ENCODE measurements at regions of chr3 and their contacts with region 1.

Region 1: DNA sequence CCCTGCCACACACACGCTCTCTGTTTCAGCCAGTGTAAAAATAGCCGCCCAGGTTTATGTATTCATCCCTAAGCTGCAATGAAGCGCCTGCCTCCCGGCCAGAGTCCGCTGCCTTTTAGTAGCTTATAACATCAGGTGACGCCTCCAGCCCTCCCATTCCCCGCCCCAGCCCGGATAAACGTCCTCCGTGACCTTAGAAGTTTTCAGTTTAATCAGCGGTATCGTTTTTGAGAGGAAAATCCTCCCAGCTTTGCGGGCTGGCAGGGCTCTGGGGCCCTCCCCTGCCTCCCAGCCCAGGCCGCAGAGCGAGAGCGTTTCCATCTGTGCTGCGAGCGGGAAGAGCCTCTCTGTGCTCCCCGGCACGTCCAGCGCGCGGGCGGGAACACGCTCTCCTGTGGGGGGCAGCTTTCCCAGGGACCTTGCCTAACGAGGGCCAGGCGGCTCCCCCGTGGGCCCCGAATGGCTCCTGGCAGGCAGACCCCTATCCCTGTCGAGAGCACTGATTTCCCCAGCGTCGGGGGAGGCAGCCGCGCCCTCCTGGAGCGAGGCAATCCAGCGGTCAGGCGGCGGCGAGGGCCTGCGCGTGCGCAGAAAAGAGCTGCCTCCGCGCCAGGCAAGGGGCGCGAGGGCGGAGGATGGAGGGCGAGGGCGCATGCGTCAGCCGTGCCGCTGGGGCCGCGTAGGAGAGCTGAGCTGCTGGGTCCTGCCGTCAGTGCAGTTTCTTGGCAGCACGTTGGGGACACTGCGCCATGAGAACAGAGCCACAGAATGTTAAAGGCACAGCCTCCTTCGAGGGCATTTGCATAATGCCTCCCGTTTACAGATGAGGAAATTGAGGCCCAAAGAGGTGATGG is 71.1 kb downstream of the CCNL1 start:
- DNase-seq: peak; percentile 97
- ATAC-seq: peak; percentile 79
- H3K4me3 Mint-ChIP-seq: peak overlapping the region; percentile 72
- H3K27ac Mint-ChIP-seq: peak overlapping the region; percentile 97
- H3K4me1 Mint-ChIP-seq: peaks cover 71% of the 10 kb centered on the region
- H3K27me3 Mint-ChIP-seq: peaks cover 1% of the 10 kb centered on the region

Region 2: DNA sequence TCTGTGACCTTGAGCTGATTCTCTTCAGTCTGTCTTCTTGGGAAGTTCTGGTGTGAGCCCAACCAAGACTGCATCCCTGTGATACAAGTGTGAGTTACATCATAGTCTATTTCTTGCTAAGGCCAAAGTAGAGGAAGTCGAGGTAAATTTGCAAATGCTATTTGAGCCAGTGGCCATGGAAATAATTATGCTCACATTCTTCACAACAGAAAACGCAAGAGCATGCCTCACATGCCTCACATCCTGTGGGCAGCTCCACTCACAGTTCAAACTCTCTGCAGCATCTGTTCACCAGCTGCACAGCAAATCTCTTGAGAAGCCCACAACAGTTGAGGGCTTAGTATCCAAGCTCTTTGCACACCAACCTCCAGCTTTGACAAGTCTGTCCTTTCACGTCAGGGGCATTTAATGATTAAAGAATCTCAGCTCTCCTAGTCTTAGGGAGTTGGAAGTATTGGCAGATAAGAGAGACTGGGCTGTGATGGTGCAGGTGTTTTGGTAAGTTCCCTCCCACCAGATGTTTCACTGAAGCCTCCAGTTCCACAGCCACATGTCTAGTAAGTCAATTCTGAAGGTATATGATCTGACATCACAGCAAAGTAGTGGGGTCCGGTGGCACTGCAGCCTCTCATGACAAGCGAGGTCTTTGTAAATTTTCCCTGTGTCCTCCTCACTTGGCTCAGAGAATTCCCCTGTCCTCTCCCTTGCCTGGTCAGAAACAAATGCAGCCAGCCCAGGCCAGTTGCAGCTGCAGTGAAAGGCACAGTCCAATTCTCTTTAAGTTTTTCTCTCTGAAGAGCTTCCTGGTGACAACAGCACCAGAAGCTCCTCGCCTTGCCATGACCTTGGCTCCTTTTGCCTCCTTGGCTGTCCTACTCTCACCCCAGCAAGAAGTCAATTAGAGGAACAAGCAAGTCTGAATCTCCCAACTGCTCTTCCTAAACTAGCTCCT is 700.1 kb before region 1 on chr3:
- CTCF ChIA-PET with region 1: no interaction called
- POLR2A ChIA-PET with region 1: no interaction called
- intact Hi-C with region 1: no loop called
- DNase-seq: peak; percentile 6
- ATAC-seq: peak; percentile 33
- H3K4me3 Mint-ChIP-seq: no peak overlapping the region
- H3K27ac Mint-ChIP-seq: no peak overlapping the region
- H3K4me1 Mint-ChIP-seq: no peaks in the 10 kb centered on the region
- H3K27me3 Mint-ChIP-seq: peaks cover 10% of the 10 kb centered on the region

Region 3: GRCh38 chr3:156483961-156484787 is 604.7 kb before region 1 on chr3:
- CTCF ChIA-PET with region 1: no interaction called
- POLR2A ChIA-PET with region 1: no interaction called
- intact Hi-C with region 1: loop called (anchors 1 to 2 kb)
- DNase-seq: peak; percentile 63
- ATAC-seq: peak; percentile 76
- H3K4me3 Mint-ChIP-seq: peak overlapping the region; percentile 69
- H3K27ac Mint-ChIP-seq: peak overlapping the region; percentile 92
- H3K4me1 Mint-ChIP-seq: peaks cover 35% of the 10 kb centered on the region
- H3K27me3 Mint-ChIP-seq: no peaks in the 10 kb centered on the region

Region 4: DNA sequence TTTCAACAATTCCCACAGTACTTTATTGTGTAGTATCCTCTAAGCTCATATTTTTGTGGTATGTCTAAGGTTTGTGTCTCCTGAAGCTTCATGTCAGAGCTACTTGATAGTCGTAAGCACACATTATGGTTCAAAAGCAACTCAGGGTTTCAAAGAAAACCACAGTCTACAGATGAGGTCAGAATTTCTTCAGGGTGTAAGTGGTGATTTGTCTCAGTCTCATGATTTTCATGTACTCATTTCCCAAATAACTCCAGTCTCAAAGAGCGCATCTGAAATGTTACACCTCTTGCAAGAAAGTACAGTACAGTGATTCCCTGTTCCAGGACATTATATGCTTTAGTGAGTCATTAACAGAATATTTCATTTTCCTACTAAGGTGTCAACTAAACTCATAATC is 486.4 kb before region 1 on chr3:
- CTCF ChIA-PET with region 1: no interaction called
- POLR2A ChIA-PET with region 1: no interaction called
- intact Hi-C with region 1: loop called in 1 of 2 experiments (anchors 5 kb)
- DNase-seq: no peak
- ATAC-seq: peak; percentile 93
- H3K4me3 Mint-ChIP-seq: no peak overlapping the region
- H3K27ac Mint-ChIP-seq: no peak overlapping the region
- H3K4me1 Mint-ChIP-seq: peaks cover 18% of the 10 kb centered on the region
- H3K27me3 Mint-ChIP-seq: peaks cover 12% of the 10 kb centered on the region

Region 5: DNA sequence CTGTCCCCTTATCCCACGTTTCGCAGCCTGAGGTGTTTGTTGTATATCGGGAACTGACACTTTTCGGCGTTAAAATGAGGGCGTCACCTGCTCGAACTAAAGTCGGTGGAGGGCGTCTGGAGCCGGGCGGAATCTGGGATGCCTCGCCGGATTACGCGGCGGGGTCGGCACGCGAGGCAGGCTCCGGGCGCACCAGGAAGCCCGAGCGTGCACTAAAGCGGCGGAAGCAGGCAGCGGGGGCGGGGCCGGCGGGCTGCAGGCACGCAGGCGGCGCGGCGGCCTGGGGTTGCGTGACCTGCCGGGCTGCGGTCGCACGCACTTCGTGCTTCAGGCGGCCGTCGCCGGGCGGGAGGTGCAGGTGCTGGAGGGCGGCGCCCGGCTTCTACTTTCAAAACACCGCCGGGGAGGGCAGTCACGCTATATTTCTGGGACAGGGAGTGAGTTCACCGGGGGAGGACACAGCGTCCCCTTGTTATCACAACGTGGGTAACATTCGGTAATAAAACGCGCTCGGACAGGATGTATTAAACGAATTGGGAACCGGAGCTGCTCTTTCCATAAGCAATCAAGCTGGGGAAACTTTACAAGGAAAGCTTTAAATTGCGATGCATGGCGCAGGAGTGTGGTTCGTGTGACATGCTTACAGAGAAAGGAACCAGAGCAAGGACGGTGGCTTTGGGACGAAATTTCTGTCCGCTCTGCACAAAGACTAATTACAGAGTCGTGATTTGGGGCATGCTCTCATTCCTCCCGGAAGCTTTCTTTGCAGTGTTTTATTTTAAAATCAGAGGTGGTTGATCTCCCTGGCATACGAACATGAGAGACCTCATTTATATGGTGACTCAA is 271.8 kb before region 1 on chr3:
- CTCF ChIA-PET with region 1: no interaction called
- POLR2A ChIA-PET with region 1: no interaction called
- intact Hi-C with region 1: loop called (anchors 1 to 2 kb)
- DNase-seq: peak; percentile 92
- ATAC-seq: peak; percentile 83
- H3K4me3 Mint-ChIP-seq: peak overlapping the region; percentile 79
- H3K27ac Mint-ChIP-seq: peak overlapping the region; percentile 92
- H3K4me1 Mint-ChIP-seq: peaks cover 36% of the 10 kb centered on the region
- H3K27me3 Mint-ChIP-seq: no peaks in the 10 kb centered on the region

Region 6: DNA sequence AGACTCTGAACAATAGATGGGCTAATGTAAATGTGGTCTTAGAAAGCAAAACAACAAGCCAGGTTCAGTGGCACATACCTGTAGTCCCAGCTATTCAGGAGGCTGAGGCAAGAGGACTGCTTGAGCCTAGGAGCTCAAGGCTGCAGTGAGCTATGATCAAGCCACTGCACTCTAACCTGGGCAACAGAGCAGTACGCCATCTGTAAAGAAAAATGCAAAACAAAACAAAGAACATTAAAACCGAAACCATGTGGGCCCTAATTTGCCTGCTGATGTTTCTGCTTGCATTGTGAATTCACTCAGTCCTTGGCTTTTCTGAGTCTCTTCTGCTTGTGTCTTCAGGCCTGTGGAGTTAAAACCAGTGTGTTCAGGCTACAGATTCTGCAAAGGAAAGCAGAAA is 14.5 kb after region 1 on chr3:
- CTCF ChIA-PET with region 1: interaction called, 9 read pairs
- POLR2A ChIA-PET with region 1: interaction called, 4 read pairs
- intact Hi-C with region 1: loop called (anchors 1 to 2 kb)
- DNase-seq: peak; percentile 47
- ATAC-seq: peak; percentile 65
- H3K4me3 Mint-ChIP-seq: no peak overlapping the region
- H3K27ac Mint-ChIP-seq: peak overlapping the region; percentile 88
- H3K4me1 Mint-ChIP-seq: peaks cover 51% of the 10 kb centered on the region
- H3K27me3 Mint-ChIP-seq: no peaks in the 10 kb centered on the region

Region 7: DNA sequence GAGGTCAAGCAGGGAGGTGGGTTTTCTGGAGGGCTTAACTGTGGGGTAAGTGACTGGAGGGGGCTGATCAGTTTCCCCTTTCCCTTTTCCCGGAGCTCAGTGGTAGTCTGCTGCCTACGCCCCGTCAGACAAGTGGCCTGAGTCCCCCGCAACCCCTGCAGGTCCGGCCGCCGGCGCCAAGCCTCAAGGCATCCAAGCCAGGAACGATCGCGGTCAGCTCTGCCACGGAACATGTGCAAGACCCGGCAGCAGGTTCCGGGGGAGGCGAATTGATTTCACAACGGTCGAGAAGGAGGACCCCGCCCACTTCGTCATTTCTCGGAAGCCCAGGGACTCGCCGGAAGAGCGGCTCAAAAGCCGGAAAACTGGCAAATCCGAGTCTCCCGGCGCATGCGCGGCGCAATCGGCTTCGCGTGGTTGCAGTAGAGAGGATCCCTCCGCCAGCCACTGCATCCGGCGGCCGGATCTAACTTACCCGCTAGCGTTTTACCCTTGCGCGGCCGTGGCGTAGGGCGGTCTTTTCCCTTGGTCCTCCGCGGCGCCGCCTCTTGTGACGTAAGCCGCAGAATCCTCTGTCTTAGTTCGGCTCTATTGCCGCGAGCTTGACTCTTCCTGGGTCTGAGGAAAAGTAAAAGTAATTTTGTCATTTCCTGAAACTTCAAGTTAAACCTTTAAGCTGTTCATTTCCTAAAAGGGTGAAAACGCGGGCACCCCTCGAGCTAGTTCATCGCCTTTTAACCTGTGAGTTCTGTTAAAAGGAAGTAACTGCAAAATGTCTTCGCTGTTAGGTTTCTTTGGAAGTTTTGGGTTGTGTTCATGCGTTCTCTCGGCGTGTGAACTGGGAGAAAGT is 86.0 kb after region 1 on chr3:
- CTCF ChIA-PET with region 1: no interaction called
- POLR2A ChIA-PET with region 1: no interaction called
- intact Hi-C with region 1: loop called (anchors 1 kb)
- DNase-seq: peak; percentile 99
- ATAC-seq: peak; percentile 95
- H3K4me3 Mint-ChIP-seq: peak overlapping the region; percentile 94
- H3K27ac Mint-ChIP-seq: peak overlapping the region; percentile 99
- H3K4me1 Mint-ChIP-seq: peaks cover 20% of the 10 kb centered on the region
- H3K27me3 Mint-ChIP-seq: no peaks in the 10 kb centered on the region